MCF 10A (cell line): ENCODE measurements at regions of chrX and their contacts with region 1.

Region 1: GRCh38 chrX:21926527-21927278 is 13.8 kb upstream of the SMS start:
- DNase-seq: peak; percentile 94
- H3K4me3 Mint-ChIP-seq: peak overlapping the region; percentile 52
- H3K27ac Mint-ChIP-seq: peak overlapping the region; percentile 78
- H3K4me1 Mint-ChIP-seq: peaks cover 12% of the 10 kb centered on the region
- H3K27me3 Mint-ChIP-seq: peaks cover 16% of the 10 kb centered on the region
- CTCF ChIP-seq: no peak

Region 2: GRCh38 chrX:21747558-21747957 is 179.1 kb before region 1 on chrX:
- CTCF ChIA-PET with region 1: no interaction called
- POLR2A ChIA-PET with region 1: no interaction called
- intact Hi-C with region 1: no loop called
- DNase-seq: no peak
- H3K4me3 Mint-ChIP-seq: no peak overlapping the region
- H3K27ac Mint-ChIP-seq: no peak overlapping the region
- H3K4me1 Mint-ChIP-seq: no peaks in the 10 kb centered on the region
- H3K27me3 Mint-ChIP-seq: peaks cover 68% of the 10 kb centered on the region
- CTCF ChIP-seq: no peak

Region 3: GRCh38 chrX:21940356-21940829 is 13.7 kb after region 1 on chrX and contains the start of gene SMS:
- CTCF ChIA-PET with region 1: no interaction called
- POLR2A ChIA-PET with region 1: interaction called, 29 read pairs
- intact Hi-C with region 1: loop called (anchors 1 kb)
- DNase-seq: peak; percentile 77
- H3K4me3 Mint-ChIP-seq: peak within 1 kb of the TSS; percentile 69
- H3K27ac Mint-ChIP-seq: no peak within 1 kb of the TSS
- H3K4me1 Mint-ChIP-seq: peaks cover 13% of the 10 kb centered on the region
- H3K27me3 Mint-ChIP-seq: no peaks in the 10 kb centered on the region
- CTCF ChIP-seq: no peak
- total RNA-seq, gene SMS: 160 and 181 TPM in 2 replicates

Region 4: DNA sequence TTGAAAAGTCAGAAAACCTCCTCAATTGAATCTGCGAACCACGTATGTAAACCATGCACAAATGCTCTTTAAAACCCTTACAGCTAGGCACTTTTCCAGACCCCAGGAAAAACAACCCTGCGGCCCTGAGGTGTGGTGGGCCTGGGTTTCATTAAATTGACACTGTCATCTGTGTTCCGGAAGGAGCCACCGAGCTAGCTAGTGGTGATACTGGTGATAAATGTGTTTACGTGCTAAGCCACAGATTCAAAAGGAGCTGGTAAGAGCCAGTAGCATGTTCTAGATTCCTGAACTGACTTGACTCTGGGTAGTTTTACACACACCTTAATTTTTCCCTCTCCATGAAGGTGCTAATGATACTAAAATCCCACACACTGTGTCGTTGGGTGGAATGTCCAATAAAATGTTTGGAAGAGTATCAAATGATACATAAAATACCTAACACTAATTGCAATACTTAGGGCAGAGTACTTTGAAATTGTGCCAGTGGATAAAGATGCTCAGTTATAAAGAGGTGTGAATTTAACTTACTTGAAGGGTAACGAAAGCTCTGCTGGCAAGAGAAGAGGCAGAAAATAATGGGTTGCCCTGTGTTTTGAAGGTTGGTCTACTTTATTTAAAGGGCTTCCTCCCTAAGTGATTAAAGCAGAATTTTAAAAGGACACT is 22.3 kb after region 1 on chrX:
- CTCF ChIA-PET with region 1: interaction called, 4 read pairs
- POLR2A ChIA-PET with region 1: interaction called, 11 read pairs
- intact Hi-C with region 1: no loop called
- DNase-seq: no peak
- H3K4me3 Mint-ChIP-seq: no peak overlapping the region
- H3K27ac Mint-ChIP-seq: peak overlapping the region; percentile 55
- H3K4me1 Mint-ChIP-seq: peaks cover 15% of the 10 kb centered on the region
- H3K27me3 Mint-ChIP-seq: peaks cover 41% of the 10 kb centered on the region
- CTCF ChIP-seq: no peak